CD4-positive, alpha-beta memory T cell (primary cell): ENCODE measurements at regions of chr17 and their contacts with region 1.

Region 1: GRCh38 chr17:63842540-63843386 is at the start of gene SMARCD2:
- DNase-seq: peak; percentile 97 to 98 (median 98)
- H3K4me3 ChIP-seq: peak within 1 kb of the TSS; percentile 58 to 72
- H3K4me3 Mint-ChIP-seq: peak within 1 kb of the TSS; percentile 86 to 97 (median 94)
- H3K27ac ChIP-seq: peak within 1 kb of the TSS; percentile 84
- H3K27ac Mint-ChIP-seq: peak within 1 kb of the TSS; percentile 87 to 96 (median 95)
- H3K4me1 ChIP-seq: peaks cover 48% of the 10 kb centered on the region
- H3K4me1 Mint-ChIP-seq: peaks cover 17 to 57% (median 35%) of the 10 kb centered on the region in 4 donors
- H3K27me3 ChIP-seq: no peaks in the 10 kb centered on the region
- H3K27me3 Mint-ChIP-seq: no peaks in the 10 kb centered on the region
- total RNA-seq, gene SMARCD2: 113 to 114 TPM

Region 2: GRCh38 chr17:63514974-63515373 is 327.8 kb before region 1 on chr17:
- CTCF ChIA-PET with region 1: no interaction called
- POLR2A ChIA-PET with region 1: no interaction called
- intact Hi-C with region 1: no loop called
- DNase-seq: no peak
- H3K4me3 ChIP-seq: no peak overlapping the region
- H3K4me3 Mint-ChIP-seq: no peak overlapping the region
- H3K27ac ChIP-seq: no peak overlapping the region
- H3K27ac Mint-ChIP-seq: no peak overlapping the region
- H3K4me1 ChIP-seq: no peaks in the 10 kb centered on the region
- H3K4me1 Mint-ChIP-seq: no peaks in the 10 kb centered on the region
- H3K27me3 ChIP-seq: no peaks in the 10 kb centered on the region
- H3K27me3 Mint-ChIP-seq: peaks cover 5 to 7% of the 10 kb centered on the region in 2 donors

Region 3: GRCh38 chr17:63764716-63765115 is 78.0 kb before region 1 on chr17:
- CTCF ChIA-PET with region 1: no interaction called
- POLR2A ChIA-PET with region 1: no interaction called
- intact Hi-C with region 1: no loop called
- DNase-seq: no peak
- H3K4me3 ChIP-seq: no peak overlapping the region
- H3K4me3 Mint-ChIP-seq: no peak overlapping the region
- H3K27ac ChIP-seq: no peak overlapping the region
- H3K27ac Mint-ChIP-seq: no peak overlapping the region
- H3K4me1 ChIP-seq: peaks cover 15% of the 10 kb centered on the region
- H3K4me1 Mint-ChIP-seq: peaks cover 17 to 28% (median 22%) of the 10 kb centered on the region in 4 donors
- H3K27me3 ChIP-seq: no peaks in the 10 kb centered on the region
- H3K27me3 Mint-ChIP-seq: no peaks in the 10 kb centered on the region

Region 4: GRCh38 chr17:63827002-63827771 is 15.6 kb before region 1 on chr17 and contains the starts of genes FTSJ3 and PSMC5:
- CTCF ChIA-PET with region 1: interaction called, 37 read pairs
- POLR2A ChIA-PET with region 1: interaction called, 104 read pairs
- intact Hi-C with region 1: loop called (anchors 1 kb)
- DNase-seq: peak; percentile 96 to 98 (median 97)
- H3K4me3 ChIP-seq: peak within 1 kb of the TSS; percentile 93
- H3K4me3 Mint-ChIP-seq: peak within 1 kb of the TSS; percentile 93 to 100 (median 98)
- H3K27ac ChIP-seq: peak within 1 kb of the TSS; percentile 90
- H3K27ac Mint-ChIP-seq: peak within 1 kb of the TSS; percentile 95 to 100 (median 100)
- H3K4me1 ChIP-seq: peaks cover 61% of the 10 kb centered on the region
- H3K4me1 Mint-ChIP-seq: peaks cover 46 to 92% (median 74%) of the 10 kb centered on the region in 4 donors
- H3K27me3 ChIP-seq: no peaks in the 10 kb centered on the region
- H3K27me3 Mint-ChIP-seq: no peaks in the 10 kb centered on the region
- total RNA-seq, gene FTSJ3: 62.1 to 62.2 TPM
- total RNA-seq, gene PSMC5: 121 TPM